ENCODE measurements at regions of chr16 and their contacts with region 1.

Region 1: DNA sequence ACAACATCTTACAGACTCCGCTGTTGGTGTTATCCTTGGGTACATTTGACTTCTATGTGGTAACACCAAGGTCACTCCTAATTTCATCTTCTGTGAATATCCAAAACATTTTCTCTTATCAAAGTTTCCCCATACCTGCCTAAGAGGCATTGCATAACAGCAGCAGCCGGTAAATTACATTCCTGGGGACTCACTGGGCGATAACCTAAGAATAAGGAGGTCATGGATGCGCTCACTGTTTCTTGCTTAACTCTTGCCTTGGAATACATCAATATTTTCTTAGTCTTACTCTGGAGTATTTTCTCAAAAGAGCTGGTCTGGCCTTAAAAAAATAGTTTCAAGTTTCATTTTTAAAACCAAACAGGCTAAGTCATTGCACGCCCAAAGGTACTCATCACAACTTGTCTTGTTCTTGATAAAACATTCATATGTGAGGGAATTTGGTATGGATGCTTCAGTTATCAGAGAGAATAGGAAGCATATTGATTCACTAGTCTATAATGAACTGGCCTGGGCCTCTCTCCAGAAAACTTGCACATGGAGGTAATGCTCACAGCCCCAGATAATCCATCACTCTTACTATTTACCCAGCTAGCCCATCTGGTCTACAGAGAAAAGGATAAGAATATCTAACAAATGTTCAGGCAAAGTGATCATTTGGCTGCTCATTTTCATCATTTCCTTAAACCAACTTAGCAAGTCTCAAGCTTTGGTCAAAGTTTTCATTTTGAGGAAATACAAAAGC is 235.0 kb upstream of the ERCC4 start:
- DNase-seq: no peak
- H3K4me3 ChIP-seq: no peak overlapping the region
- H3K27ac ChIP-seq: no peak overlapping the region
- H3K4me1 ChIP-seq: no peaks in the 10 kb centered on the region
- H3K27me3 ChIP-seq: no peaks in the 10 kb centered on the region
- CTCF ChIP-seq: no peak

Region 2: DNA sequence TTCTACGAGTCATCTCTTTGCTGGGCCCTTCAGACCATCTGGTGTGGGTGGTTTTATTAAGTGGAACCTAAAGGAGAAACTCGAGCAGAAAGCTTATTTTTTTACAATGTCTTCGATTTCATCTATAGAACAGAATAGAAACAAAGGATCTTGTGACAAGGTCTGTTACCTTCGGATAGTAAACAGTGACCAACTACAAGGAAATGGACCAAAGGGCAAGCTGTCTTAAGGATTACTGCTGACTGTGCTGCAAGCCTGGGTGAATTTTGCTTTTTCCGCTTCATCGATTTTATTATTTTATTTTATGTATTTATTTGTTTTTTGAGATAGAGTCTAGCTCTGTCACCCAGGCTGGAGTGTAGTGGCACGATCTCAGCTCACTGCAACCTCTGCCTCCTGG is 114.0 kb before region 1 on chr16:
- dilution Hi-C with region 1: no loop called
- DNase-seq: no peak
- H3K4me3 ChIP-seq: no peak overlapping the region
- H3K27ac ChIP-seq: no peak overlapping the region
- H3K4me1 ChIP-seq: no peaks in the 10 kb centered on the region
- H3K27me3 ChIP-seq: no peaks in the 10 kb centered on the region
- CTCF ChIP-seq: no peak

Region 3: GRCh38 chr16:13645591-13646245 is 39.3 kb before region 1 on chr16:
- dilution Hi-C with region 1: loop called (anchors 5 kb)
- DNase-seq: no peak
- H3K4me3 ChIP-seq: no peak overlapping the region
- H3K27ac ChIP-seq: no peak overlapping the region
- H3K4me1 ChIP-seq: no peaks in the 10 kb centered on the region
- H3K27me3 ChIP-seq: no peaks in the 10 kb centered on the region
- CTCF ChIP-seq: no peak

Measured in keratinocyte (primary cell).